Transverse colon (tissue), 4 donors: ENCODE measurements at regions of chr4 and their contacts with region 1.

Region 1: DNA sequence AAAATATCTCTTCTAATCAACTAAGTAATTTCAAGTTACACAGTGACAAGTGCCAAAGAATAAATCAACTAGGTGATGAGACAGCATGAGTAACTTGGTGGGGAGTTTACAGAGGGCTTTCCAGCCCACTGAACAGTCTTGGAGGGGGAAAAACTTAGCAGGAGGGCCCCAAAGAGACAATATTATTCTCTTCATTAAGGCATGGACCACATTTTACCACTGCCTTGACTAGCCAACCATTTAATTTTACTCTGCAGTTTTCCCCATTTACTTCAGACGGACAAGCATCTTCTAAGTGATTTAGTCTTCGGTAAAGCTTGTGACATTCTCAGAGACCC is 25.3 kb upstream of the GATB start:
- DNase-seq: no peak
- H3K4me3 ChIP-seq: no peak overlapping the region
- H3K27ac ChIP-seq: no peak overlapping the region
- H3K4me1 ChIP-seq: no peaks in the 10 kb centered on the region
- H3K27me3 ChIP-seq: no peaks in the 10 kb centered on the region
- CTCF ChIP-seq: no peak
- EP300 ChIP-seq: no peak
- POLR2A ChIP-seq: no peak

Region 2: GRCh38 chr4:150619042-150619441 is 1167.1 kb before region 1 on chr4:
- in situ Hi-C with region 1: no loop called
- intact Hi-C with region 1: no loop called
- DNase-seq: no peak
- H3K4me3 ChIP-seq: no peak overlapping the region
- H3K27ac ChIP-seq: no peak overlapping the region
- H3K4me1 ChIP-seq: peaks cover 0 to 7% (median 0%) of the 10 kb centered on the region in 4 donors
- H3K27me3 ChIP-seq: no peaks in the 10 kb centered on the region
- CTCF ChIP-seq: no peak
- EP300 ChIP-seq: no peak
- POLR2A ChIP-seq: no peak

Region 3: DNA sequence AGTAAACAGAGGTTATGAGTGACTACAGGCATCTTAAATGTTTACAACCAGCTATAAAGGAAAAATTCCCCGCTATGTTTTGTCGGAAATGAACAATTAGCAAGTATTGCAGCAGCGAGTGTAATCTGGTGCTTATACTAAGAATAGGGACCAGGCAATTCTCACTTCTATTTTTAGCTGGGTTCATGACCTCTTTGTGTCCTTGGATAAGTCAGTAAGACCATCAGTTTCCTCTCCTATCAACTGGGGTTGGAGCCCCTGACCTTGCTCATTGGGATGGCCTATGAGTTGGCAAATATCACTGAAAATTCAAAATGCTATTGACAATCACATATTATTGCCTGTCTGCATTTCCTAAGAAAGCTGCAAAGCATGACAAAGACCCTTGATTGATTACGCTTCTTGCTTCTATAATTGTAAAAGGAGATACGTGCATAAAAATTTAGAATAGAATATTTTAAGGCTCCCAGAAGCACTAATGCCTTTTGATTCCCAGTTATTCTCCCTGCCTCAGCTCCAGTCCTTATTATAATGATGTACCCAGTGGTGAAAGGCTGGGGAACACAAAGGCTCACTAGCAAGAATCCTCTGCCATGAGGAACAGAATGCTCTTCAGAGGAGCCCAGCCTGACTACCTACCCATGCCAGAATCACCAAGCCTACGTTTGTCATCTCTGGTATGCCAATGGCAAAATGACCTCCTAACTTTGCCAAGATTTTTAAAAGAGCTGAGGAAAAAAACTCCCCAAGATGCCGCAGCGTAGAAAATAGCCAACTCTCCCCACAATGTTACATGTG is 47.2 kb before region 1 on chr4:
- in situ Hi-C with region 1: no loop called
- intact Hi-C with region 1: loop called (anchors 2 kb)
- DNase-seq: no peak
- H3K4me3 ChIP-seq: no peak overlapping the region
- H3K27ac ChIP-seq: no peak overlapping the region
- H3K4me1 ChIP-seq: peaks cover 0 to 6% (median 0%) of the 10 kb centered on the region in 4 donors
- H3K27me3 ChIP-seq: no peaks in the 10 kb centered on the region
- CTCF ChIP-seq: no peak
- EP300 ChIP-seq: no peak
- POLR2A ChIP-seq: no peak